ENCODE measurements at regions of chr20 and their contacts with region 1.

Region 1: DNA sequence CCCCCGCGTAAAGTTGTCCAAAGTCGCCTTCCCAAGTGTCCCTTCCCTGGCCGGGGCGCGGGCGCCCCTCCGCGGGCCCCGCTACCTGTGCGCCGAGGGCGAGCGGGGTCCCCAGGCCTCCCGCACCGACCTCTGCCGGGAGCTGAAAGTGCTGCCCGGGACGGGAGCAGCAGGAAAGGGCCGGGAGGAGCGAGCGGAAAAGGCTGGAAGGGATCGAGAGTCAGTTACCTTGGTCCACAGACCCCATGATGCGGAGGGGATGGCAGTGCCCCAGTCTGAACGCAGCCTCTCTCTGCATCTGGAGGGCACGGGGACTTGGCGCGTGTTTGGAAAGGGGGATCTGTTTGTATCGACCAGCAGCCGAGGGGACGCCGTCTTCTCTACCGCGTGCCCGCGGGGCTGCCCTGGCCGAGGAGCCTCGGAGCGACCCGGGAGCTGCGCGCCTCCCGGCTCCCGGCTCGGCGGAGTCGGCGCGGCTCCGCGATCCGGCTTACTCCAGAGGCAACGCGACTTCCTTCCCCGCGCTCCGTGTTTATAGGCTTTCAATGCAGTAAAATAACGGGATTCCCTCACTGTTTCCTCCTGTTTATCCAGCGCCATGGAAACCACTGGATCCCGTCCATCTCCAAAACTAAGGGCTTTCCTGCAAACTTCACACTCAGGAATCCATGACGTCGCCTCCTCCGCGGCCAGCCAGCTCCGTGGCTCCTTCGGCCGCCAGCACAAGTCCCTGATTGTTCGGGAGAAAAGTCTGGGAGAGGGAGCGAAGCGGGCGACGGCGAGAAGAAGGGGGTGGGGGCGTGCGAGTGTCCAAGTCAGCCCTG is 20.0 kb upstream of the NFATC2 start:
- DNase-seq: peak; percentile 53 to 95
- H3K4me3 ChIP-seq: peak overlapping the region; percentile 60 to 69
- H3K27ac ChIP-seq: peak overlapping the region; percentile 92 to 93
- H3K4me1 ChIP-seq: peaks cover 6 to 24% of the 10 kb centered on the region in 2 donors
- H3K27me3 ChIP-seq: no peaks in the 10 kb centered on the region
- CTCF ChIP-seq: peak in 1 of 3 experiments; percentile 46

Region 2: GRCh38 chr20:51531141-51531710 is 31.3 kb before region 1 on chr20:
- intact Hi-C with region 1: loop called (anchors 2 kb)
- DNase-seq: peak in 1 of 2 donors; percentile 61
- H3K4me3 ChIP-seq: no peak overlapping the region
- H3K27ac ChIP-seq: peak overlapping the region in 1 of 2 donors; percentile 76
- H3K4me1 ChIP-seq: peaks cover 7 to 11% of the 10 kb centered on the region in 2 donors
- H3K27me3 ChIP-seq: no peaks in the 10 kb centered on the region
- CTCF ChIP-seq: no peak

Region 3: DNA sequence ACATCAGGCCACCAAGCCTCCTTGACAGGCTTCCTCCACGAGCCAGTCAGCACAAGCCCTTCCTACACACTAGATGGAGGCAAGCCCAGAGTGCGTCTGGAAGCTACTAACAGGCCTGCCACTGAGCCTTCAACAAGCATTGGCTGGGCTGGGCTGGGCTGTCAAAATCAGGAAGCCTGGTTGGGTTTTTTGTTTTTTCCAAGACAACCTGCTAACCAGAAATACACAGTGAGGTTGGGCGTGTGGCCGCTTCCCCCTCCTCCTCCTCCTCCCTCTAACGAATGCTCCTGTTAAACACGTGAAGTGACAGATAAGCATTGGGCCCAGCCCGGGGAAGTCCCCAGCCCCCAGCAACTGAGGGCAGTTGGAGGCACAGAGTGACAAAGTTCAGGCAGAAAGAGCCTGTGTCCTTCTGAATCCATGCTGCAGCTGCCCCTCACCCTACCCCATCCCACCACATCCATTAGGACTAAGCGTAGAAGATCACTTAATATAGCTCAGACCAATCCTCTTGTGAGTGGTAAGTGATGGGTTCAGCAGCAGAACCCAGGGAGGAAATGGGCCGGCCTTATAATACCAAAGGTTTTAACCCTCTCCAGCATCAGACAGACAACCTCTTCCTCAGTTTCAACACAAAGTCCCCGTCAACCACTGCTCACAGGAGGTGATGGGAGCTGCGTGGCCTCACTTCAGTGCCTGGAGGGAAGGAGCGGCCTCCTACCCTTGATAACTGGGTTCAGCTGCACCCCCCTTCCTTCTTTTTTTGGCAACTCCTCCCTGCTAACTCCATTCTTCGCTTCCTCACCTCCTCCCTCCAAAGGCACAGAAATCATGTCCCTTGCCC is 21.1 kb before region 1 on chr20:
- intact Hi-C with region 1: loop called (anchors 2 kb)
- DNase-seq: peak; percentile 73 to 93
- H3K4me3 ChIP-seq: peak overlapping the region in 1 of 2 donors; percentile 65
- H3K27ac ChIP-seq: peak overlapping the region; percentile 75 to 76
- H3K4me1 ChIP-seq: peaks cover 3 to 15% of the 10 kb centered on the region in 2 donors
- H3K27me3 ChIP-seq: no peaks in the 10 kb centered on the region
- CTCF ChIP-seq: no peak